GM10248 (cell line): ENCODE measurements at regions of chr2 and their contacts with region 1.

Region 1: DNA sequence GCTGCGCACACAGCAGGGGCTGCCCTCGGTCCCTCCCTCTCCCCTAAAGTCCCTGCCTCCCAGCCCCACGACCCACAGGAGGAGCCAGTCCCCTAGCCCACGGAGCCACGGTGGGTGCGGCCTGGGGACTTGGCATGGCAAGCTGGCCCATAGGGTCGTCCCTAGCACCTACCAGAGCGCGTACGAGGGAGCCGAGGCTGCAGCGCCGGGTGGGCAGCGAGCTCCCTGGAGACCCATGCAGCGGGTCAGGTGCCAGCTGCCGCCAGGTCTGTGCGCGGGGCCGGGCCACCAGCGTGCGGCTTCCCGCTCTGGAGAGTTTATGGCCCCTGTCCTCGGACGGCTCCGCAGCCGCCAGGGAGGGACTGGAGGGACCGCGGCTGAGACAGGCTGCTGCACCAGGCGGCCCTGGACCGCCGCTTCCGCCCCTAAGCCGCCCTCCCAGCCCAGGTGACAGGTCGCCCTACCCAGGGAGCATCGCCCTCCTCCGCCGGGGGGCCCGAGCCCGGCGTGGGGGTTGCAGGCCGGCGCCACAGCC is 273.6 kb downstream of the CCDC74A start:
- DNase-seq: no peak
- CTCF ChIP-seq: no peak

Region 2: DNA sequence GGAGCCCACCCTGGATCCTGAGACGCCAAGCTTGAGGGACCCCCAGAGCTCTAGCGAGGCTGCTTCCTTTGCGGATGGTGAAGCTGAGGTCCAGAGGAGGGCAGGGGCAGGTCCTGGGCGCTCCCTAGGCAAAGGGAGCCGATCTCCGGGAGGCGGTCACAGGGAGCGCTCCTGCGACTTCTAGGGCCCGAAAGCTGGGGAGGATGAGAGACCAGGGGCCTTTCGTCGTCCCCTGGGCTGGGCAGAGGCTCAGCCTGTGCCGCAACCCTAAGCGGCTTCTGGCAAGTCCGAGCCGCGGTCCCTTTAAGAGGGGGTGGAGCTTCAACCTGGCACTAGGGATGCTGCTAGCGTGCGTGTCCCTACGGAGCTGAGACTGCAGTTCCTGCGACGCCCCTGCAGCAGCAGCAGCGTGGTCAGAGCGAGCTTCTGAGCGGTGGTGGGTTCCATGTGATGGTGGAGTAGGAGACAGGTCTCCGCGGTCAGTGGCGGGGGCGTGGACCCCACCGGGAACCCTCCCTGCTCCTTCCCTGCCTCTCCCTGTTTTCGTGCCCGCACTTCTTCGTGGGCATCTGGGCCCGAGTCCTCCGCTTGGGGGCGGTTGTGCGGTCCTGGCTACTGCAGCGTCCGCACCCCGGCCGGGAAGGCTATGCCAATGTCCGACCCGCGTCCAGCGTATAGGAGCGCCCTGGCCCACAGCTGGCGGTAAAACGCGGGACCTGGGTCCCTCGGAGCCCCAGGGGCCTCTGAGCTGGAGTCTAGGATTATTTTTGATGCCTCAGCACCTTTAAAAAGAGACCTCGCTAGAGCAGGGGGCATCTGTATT is 118.9 kb before region 1 on chr2:
- CTCF ChIA-PET with region 1: interaction called, 13 read pairs
- POLR2A ChIA-PET with region 1: no interaction called
- DNase-seq: peak; percentile 87
- CTCF ChIP-seq: peak; percentile 35